PC-3 (cell line): ENCODE measurements at regions of chr12 and their contacts with region 1.

Region 1: DNA sequence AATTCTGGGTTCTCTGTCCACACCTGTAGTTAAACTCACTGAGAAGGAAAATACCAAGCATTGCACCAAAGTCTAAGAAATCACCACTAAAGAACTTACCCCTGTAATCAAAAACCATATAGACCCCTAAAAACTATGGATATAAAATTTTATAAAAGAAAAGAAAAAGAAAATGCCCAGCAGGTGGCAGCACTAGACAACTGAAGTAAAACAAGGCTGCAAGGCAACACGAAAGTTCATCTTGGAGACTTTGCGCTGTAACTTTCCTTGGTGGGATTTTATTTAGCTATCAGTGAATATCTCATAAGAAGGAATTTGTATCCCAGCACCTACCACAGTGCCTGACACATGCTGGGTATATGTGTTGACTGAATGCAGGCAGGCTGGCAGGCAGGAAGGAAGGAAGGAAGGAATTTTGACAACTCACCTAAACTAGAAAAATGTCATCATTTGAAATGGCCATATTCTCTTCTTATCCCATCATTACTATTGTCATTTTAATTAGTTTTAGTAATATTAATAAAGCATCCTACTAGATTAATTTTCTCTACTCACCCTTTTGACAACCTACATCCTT is 68.2 kb upstream of the ETV6 start:
- DNase-seq: peak; percentile 75
- ATAC-seq: no peak
- H3K4me3 ChIP-seq: no peak overlapping the region
- H3K27ac ChIP-seq: no peak overlapping the region; the same call in 1 of the 2 replicates
- H3K4me1 ChIP-seq: peaks cover 38% of the 10 kb centered on the region
- H3K27me3 ChIP-seq: no peaks in the 10 kb centered on the region
- CTCF ChIP-seq: peak; percentile 59

Region 2: GRCh38 chr12:11397366-11397765 is 183.9 kb before region 1 on chr12:
- CTCF ChIA-PET with region 1: no interaction called
- POLR2A ChIA-PET with region 1: no interaction called
- intact Hi-C with region 1: no loop called
- DNase-seq: no peak
- ATAC-seq: no peak
- H3K4me3 ChIP-seq: no peak overlapping the region
- H3K27ac ChIP-seq: no peak overlapping the region
- H3K4me1 ChIP-seq: no peaks in the 10 kb centered on the region
- H3K27me3 ChIP-seq: no peaks in the 10 kb centered on the region
- CTCF ChIP-seq: no peak

Region 3: DNA sequence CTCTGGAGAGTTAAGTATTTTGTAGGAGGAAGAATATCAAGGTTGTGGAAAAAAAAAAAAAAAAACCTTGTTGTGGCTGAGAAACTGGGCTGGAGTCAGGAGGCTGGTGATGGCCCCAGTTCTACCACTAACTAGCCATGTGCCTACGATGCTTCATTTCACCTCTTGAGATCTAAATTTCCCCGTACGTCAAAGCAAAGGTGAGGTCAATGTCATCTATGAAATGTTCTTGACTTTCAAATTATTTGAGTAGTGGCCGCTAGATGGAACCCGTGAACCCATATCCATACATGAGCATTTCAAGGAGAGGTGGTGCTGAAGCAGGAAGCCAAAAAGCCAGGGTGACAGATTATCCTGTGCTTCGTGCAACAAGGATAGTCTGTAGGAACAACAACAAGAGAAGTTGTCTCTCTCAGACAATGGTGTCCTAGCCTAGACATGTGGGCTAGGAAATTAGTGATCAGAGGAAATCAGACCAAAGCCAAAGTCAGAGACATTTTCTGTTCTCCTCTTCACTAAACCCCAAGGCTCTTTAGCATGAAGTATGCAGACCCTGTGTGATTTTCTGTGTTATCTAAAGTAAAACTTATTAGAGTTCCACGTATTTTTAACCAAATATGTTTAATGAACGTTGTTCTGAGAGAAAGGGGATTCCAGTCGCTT is 27.3 kb before region 1 on chr12:
- CTCF ChIA-PET with region 1: no interaction called
- POLR2A ChIA-PET with region 1: no interaction called
- intact Hi-C with region 1: loop called (anchors 2 kb)
- DNase-seq: peak; percentile 68
- ATAC-seq: peak; percentile 50
- H3K4me3 ChIP-seq: no peak overlapping the region
- H3K27ac ChIP-seq: no peak overlapping the region
- H3K4me1 ChIP-seq: no peaks in the 10 kb centered on the region
- H3K27me3 ChIP-seq: no peaks in the 10 kb centered on the region
- CTCF ChIP-seq: peak; percentile 59

Region 4: GRCh38 chr12:11564984-11565651 is 16.1 kb before region 1 on chr12:
- CTCF ChIA-PET with region 1: no interaction called
- POLR2A ChIA-PET with region 1: no interaction called
- intact Hi-C with region 1: no loop called
- DNase-seq: no peak
- ATAC-seq: no peak
- H3K4me3 ChIP-seq: no peak overlapping the region
- H3K27ac ChIP-seq: no peak overlapping the region
- H3K4me1 ChIP-seq: 0 out of 2 replicates have a peak, but pooled peaks cover 5% of the 10 kb centered on the region
- H3K27me3 ChIP-seq: no peaks in the 10 kb centered on the region
- CTCF ChIP-seq: no peak

Region 5: GRCh38 chr12:11621797-11622423 is 40.6 kb after region 1 on chr12:
- CTCF ChIA-PET with region 1: no interaction called
- POLR2A ChIA-PET with region 1: no interaction called
- intact Hi-C with region 1: loop called (anchors 5 kb)
- DNase-seq: peak; percentile 6
- ATAC-seq: no peak
- H3K4me3 ChIP-seq: no peak overlapping the region
- H3K27ac ChIP-seq: no peak overlapping the region
- H3K4me1 ChIP-seq: no peaks in the 10 kb centered on the region
- H3K27me3 ChIP-seq: no peaks in the 10 kb centered on the region
- CTCF ChIP-seq: no peak

Region 6: DNA sequence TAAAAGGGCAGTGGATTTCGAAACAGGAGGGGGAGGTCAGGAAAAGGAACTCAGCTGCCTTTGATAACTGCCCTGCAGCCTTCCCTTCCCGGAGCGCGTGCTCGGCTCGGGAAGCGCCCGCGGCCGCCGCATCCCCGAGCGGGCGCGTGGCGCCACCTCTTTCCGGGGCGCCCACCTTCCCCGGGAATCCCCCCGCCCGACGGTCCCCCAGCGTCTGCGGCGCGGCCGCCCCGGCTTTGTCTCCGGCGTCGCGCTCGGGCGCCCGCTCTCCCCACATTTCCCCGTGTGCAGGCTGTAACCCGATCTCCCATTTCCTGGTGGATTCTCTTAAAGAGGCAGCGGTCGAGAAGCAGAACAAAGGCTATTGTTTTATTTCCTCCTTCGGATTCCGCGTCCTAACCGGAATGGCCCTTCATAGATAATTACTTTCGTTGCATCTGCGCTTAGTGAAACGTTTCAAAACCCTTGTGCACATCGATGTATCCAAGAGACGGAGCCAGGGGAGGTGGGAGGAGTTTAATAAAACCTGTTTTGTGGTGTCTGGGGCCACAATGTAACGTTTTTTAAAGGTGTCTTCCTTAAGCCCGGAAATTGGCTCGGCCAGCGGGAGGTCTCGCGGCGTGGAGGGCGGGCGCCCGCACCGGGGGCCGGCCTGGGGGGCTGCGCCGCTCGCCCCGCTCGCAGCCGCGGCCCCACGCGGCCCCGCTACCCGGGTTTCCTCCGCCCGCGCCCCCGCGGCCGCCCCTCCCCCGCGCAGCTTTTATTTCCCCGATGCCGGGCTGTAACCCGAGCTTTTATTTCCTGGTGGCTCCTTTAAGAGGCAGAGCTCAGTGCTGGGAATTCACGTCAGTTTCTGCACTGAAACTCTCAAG is 67.8 kb after region 1 on chr12 and contains the start of gene ETV6:
- CTCF ChIA-PET with region 1: no interaction called
- POLR2A ChIA-PET with region 1: interaction called, 4 read pairs
- intact Hi-C with region 1: loop called (anchors 2 kb)
- DNase-seq: peak; percentile 80
- ATAC-seq: peak; percentile 70
- H3K4me3 ChIP-seq: peak within 1 kb of the TSS; percentile 95
- H3K27ac ChIP-seq: peak within 1 kb of the TSS; percentile 88
- H3K4me1 ChIP-seq: peaks cover 14% of the 10 kb centered on the region
- H3K27me3 ChIP-seq: no peaks in the 10 kb centered on the region
- CTCF ChIP-seq: no peak
- total RNA-seq, gene ETV6: 5.0 and 6.6 TPM in 2 replicates

Region 7: GRCh38 chr12:11798856-11799501 is 217.7 kb after region 1 on chr12:
- CTCF ChIA-PET with region 1: no interaction called
- POLR2A ChIA-PET with region 1: no interaction called
- intact Hi-C with region 1: loop called (anchors 10 kb)
- DNase-seq: peak; percentile 89
- ATAC-seq: peak; percentile 34
- H3K4me3 ChIP-seq: no peak overlapping the region
- H3K27ac ChIP-seq: peak overlapping the region; percentile 75
- H3K4me1 ChIP-seq: peaks cover 39% of the 10 kb centered on the region
- H3K27me3 ChIP-seq: no peaks in the 10 kb centered on the region
- CTCF ChIP-seq: no peak

Region 8: DNA sequence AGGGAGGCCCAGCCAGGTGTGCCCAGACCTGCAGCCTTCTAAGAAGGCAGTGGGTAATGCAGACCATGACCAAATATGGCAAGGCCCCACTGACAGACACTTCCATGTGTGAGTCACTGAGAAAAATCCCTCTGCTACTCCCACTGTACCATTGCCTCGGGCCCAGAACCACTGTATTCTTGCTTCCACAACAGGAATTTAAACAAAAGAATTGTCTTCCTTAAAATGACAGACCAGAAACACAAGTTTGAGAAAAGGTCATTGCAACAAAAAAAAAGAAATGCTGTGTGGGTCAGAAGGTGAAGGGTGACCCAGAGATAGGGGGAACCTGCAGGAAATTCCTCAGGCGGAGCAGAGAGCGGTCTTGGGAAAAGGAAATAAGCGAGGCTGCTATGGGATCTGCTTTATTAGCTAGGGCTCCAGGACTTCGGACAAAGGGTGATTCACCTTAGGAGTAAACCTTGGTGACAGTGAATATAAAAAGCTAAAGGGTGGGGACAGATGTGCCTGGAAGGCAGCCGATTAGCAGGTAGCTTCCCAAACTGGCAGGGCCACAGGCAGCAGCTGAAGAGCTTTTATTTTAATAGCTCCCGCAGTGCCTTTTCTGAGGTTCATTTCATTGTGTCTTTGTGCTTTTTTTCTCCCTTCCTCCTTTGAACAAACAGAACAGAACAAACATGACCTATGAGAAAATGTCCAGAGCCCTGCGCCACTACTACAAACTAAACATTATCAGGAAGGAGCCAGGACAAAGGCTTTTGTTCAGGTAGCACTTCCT is 304.2 kb after region 1 on chr12:
- CTCF ChIA-PET with region 1: no interaction called
- POLR2A ChIA-PET with region 1: no interaction called
- intact Hi-C with region 1: loop called (anchors 10 kb)
- DNase-seq: peak; percentile 85
- ATAC-seq: peak; percentile 78
- H3K4me3 ChIP-seq: peak overlapping the region; percentile 58
- H3K27ac ChIP-seq: peak overlapping the region; percentile 100
- H3K4me1 ChIP-seq: peaks cover 48% of the 10 kb centered on the region
- H3K27me3 ChIP-seq: no peaks in the 10 kb centered on the region
- CTCF ChIP-seq: no peak

Region 9: DNA sequence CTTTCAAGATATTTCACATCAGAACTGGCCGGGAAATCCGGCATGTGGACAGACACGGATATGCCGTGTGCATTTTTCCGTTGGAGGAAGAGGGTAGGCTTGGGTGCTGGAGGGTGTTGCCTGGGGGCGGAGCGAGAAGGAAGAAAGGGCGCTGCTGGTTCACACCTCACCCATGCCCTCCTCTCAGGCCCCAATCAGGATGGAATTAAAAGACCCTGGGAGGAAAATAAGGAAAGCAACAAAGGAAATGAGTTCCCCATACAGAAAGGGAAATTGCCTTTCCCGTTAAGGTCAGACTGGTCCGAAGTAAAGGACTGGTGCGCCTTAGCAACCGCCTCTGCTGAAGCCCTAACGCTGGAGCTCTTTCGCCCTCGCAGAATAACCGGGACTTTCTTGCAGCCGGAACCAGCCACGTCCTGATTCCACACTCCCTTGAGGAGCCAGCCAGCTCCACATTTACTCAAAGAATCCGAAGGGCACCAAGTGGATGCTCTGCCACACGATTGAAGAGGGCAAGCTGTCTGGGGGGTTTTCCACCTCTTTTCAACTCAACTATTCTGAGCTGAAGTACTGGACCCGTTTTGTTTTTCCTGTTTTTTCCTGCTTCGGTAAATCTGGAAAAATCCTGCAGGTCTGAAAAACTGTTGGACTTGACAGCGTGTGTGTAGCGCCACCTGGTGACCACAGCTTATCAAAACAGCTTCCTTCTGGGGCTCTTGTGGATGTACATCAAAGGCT is 451.8 kb after region 1 on chr12:
- CTCF ChIA-PET with region 1: interaction called, 29 read pairs
- POLR2A ChIA-PET with region 1: no interaction called
- intact Hi-C with region 1: loop called (anchors 1 kb)
- DNase-seq: peak; percentile 87
- ATAC-seq: peak; percentile 79
- H3K4me3 ChIP-seq: peak overlapping the region; percentile 64
- H3K27ac ChIP-seq: peak overlapping the region; percentile 17; the same call in 1 of the 2 replicates
- H3K4me1 ChIP-seq: peaks cover 10% of the 10 kb centered on the region
- H3K27me3 ChIP-seq: no peaks in the 10 kb centered on the region
- CTCF ChIP-seq: peak; percentile 87